ENCODE measurements at regions of chr4 and their contacts with region 1.

Region 1: GRCh38 chr4:154029171-154029570 is 240.3 kb upstream of the SFRP2 start:
- DNase-seq: no peak
- ATAC-seq: no peak
- H3K4me3 ChIP-seq: no peak overlapping the region
- H3K4me3 Mint-ChIP-seq: no peak overlapping the region
- H3K27ac ChIP-seq: no peak overlapping the region
- H3K27ac Mint-ChIP-seq: no peak overlapping the region
- H3K4me1 ChIP-seq: no peaks in the 10 kb centered on the region
- H3K4me1 Mint-ChIP-seq: no peaks in the 10 kb centered on the region
- H3K27me3 ChIP-seq: peaks cover 0 to 11% of the 10 kb centered on the region in 2 experiments
- H3K27me3 Mint-ChIP-seq: peaks cover 20 to 26% of the 10 kb centered on the region in 2 donors

Region 2: DNA sequence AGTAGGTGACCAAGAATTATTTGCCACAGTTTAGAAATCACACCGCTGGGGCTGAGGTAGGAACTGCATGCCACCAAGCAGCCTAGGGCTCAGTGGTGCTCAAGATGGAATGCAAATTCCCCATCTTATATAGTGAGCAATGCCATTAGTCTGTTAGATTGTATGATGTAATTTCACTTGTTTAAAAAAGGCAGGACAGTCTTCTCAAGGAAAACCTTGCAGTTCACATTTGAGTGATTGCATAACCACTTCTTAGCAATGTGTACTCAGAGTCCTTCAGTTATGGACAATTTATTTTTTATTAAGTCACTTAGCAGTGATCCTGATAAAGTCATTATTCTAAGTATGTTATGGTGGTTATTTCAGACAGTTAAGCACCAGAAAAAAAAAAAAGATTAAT is 97.4 kb before region 1 on chr4:
- CTCF ChIA-PET with region 1: no interaction called
- POLR2A ChIA-PET with region 1: interaction called in 1 of 2 experiments, 10 read pairs
- DNase-seq: no peak
- ATAC-seq: no peak
- H3K4me3 ChIP-seq: no peak overlapping the region
- H3K4me3 Mint-ChIP-seq: no peak overlapping the region
- H3K27ac ChIP-seq: no peak overlapping the region
- H3K27ac Mint-ChIP-seq: no peak overlapping the region
- H3K4me1 ChIP-seq: no peaks in the 10 kb centered on the region
- H3K4me1 Mint-ChIP-seq: peaks cover 0 to 2% (median 0%) of the 10 kb centered on the region in 3 donors
- H3K27me3 ChIP-seq: peaks cover 0 to 8% of the 10 kb centered on the region in 2 experiments
- H3K27me3 Mint-ChIP-seq: peaks cover 19 to 32% of the 10 kb centered on the region in 2 donors

Measured in T-cell (primary cell).